Activated CD4-positive, alpha-beta T cell treated with anti-CD3 and anti-CD28 coated beads, Interleukin-2, amount 10 ng/mL, durations not matched to agents 24 days and 14 days (primary cell): ENCODE measurements at regions of chr7 and their contacts with region 1.

Region 1: GRCh38 chr7:117750612-117751563 is 122.4 kb downstream of the CTTNBP2 start:
- DNase-seq: no peak
- H3K4me3 Mint-ChIP-seq: no peak overlapping the region
- H3K27ac Mint-ChIP-seq: no peak overlapping the region
- H3K4me1 Mint-ChIP-seq: no peaks in the 10 kb centered on the region
- H3K27me3 Mint-ChIP-seq: peaks cover 4% of the 10 kb centered on the region

Region 2: GRCh38 chr7:118104812-118105441 is 354.0 kb after region 1 on chr7:
- intact Hi-C with region 1: loop called (anchors 10 kb)
- DNase-seq: no peak
- H3K4me3 Mint-ChIP-seq: no peak overlapping the region
- H3K27ac Mint-ChIP-seq: no peak overlapping the region
- H3K4me1 Mint-ChIP-seq: no peaks in the 10 kb centered on the region
- H3K27me3 Mint-ChIP-seq: peaks cover 2% of the 10 kb centered on the region